Activated T-helper 2 cell treated with anti-CD3 and anti-CD28 coated beads, Interferon-gamma antibody, Interleukin-2, Interleukin-4, amounts not matched to agents 10 μg/mL and 5 μg/mL and 100 μg/mL, durations not matched to agents 14 hours and 24 hours and 36 hours (primary cell): ENCODE measurements at regions of chr1 and their contacts with region 1.

Region 1: GRCh38 chr1:168360151-168361021 is 79.7 kb downstream of the TBX19 start:
- DNase-seq: peak; percentile 39
- H3K4me3 Mint-ChIP-seq: peak overlapping the region; percentile 18
- H3K27ac Mint-ChIP-seq: peak overlapping the region; percentile 92
- H3K4me1 Mint-ChIP-seq: peaks cover 69% of the 10 kb centered on the region
- H3K27me3 Mint-ChIP-seq: no peaks in the 10 kb centered on the region

Region 2: GRCh38 chr1:168225476-168226190 is 134.8 kb before region 1 on chr1 and contains the start of gene SFT2D2:
- intact Hi-C with region 1: loop called (anchors 2 kb)
- DNase-seq: peak; percentile 77
- H3K4me3 Mint-ChIP-seq: peak within 1 kb of the TSS; percentile 98
- H3K27ac Mint-ChIP-seq: peak within 1 kb of the TSS; percentile 96
- H3K4me1 Mint-ChIP-seq: peaks cover 51% of the 10 kb centered on the region
- H3K27me3 Mint-ChIP-seq: no peaks in the 10 kb centered on the region
- total RNA-seq, gene SFT2D2: 106 and 119 TPM in 2 replicates

Region 3: GRCh38 chr1:168342572-168343280 is 17.7 kb before region 1 on chr1:
- intact Hi-C with region 1: loop called (anchors 1 kb)
- DNase-seq: peak; percentile 82
- H3K4me3 Mint-ChIP-seq: no peak overlapping the region
- H3K27ac Mint-ChIP-seq: peak overlapping the region; percentile 80
- H3K4me1 Mint-ChIP-seq: peaks cover 82% of the 10 kb centered on the region
- H3K27me3 Mint-ChIP-seq: no peaks in the 10 kb centered on the region

Region 4: GRCh38 chr1:168396940-168397698 is 36.7 kb after region 1 on chr1:
- intact Hi-C with region 1: loop called (anchors 1 kb)
- DNase-seq: no peak
- H3K4me3 Mint-ChIP-seq: no peak overlapping the region
- H3K27ac Mint-ChIP-seq: no peak overlapping the region
- H3K4me1 Mint-ChIP-seq: peaks cover 46% of the 10 kb centered on the region
- H3K27me3 Mint-ChIP-seq: peaks cover 4% of the 10 kb centered on the region

Region 5: DNA sequence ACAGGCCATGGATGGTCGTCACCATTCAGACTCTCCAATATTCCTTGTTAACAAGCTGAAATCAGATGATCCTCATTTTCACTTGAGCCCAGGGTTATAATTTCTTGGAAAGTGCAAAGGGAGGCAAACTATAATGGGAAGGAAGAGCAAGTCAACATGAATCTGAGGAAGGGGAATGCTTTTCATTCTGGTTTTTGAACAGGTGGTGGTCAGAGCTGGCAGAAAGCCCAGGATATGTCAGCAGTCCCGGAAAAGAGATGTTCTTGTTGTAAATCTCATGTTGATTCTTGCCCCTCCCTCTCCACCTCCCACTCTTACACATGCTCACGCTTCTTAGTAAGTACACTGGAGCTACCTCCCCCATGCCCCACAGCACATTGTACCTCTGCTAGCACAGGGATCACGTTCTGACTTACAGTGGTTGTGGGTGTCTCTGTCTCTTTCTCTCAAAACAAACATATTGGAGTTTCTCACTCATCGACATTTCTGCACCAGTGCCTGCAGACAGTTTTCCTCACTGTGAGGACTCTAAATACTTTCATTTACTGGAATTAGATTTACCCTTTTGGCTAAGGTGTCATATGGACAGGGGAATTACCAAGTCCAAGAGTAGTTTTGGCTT is 105.8 kb after region 1 on chr1:
- intact Hi-C with region 1: loop called (anchors 1 kb)
- DNase-seq: no peak
- H3K4me3 Mint-ChIP-seq: no peak overlapping the region
- H3K27ac Mint-ChIP-seq: peak overlapping the region; percentile 76
- H3K4me1 Mint-ChIP-seq: peaks cover 58% of the 10 kb centered on the region
- H3K27me3 Mint-ChIP-seq: no peaks in the 10 kb centered on the region

Region 6: DNA sequence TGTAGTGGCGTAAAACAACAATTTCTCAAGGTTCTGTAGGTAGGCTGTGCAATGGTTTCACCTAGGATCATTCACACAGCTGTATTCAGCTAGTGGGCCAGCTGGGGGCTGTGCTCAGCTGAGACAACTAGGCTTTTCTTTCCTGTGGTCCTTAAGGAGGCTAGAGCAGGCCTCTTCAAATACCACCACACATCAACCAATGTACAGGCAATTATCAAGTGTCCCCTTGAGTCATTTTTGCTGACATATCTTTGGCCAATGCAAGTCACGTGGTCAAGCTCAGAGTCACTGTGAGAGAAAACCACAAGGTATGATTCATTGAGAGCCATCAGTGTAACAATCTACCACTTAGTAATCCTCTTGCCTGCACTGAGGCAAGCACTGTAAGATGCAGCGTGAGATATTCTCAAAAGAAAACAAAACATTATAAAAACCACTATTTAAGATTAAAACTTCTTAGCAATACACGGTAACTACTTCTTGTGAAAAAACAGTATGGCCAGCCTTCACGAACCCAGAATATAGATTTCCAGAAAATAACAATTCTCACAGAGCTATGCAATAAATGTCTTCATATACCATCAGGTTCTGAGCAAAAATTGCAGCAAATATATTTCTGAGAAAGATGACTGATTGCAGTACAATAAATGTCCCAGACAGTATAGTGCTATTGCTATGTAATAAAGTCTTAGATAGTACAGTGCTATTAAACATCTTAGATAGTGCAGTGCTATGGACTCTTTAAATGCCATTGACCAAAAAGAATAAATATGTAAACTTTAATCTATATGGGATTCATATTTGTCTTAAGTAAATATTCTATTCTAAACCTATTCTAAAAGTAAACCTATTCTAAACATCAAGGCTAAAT is 951.9 kb after region 1 on chr1:
- intact Hi-C with region 1: loop called (anchors 1 kb)
- DNase-seq: peak; percentile 69
- H3K4me3 Mint-ChIP-seq: no peak overlapping the region
- H3K27ac Mint-ChIP-seq: peak overlapping the region; percentile 70
- H3K4me1 Mint-ChIP-seq: peaks cover 31% of the 10 kb centered on the region
- H3K27me3 Mint-ChIP-seq: no peaks in the 10 kb centered on the region

Region 7: DNA sequence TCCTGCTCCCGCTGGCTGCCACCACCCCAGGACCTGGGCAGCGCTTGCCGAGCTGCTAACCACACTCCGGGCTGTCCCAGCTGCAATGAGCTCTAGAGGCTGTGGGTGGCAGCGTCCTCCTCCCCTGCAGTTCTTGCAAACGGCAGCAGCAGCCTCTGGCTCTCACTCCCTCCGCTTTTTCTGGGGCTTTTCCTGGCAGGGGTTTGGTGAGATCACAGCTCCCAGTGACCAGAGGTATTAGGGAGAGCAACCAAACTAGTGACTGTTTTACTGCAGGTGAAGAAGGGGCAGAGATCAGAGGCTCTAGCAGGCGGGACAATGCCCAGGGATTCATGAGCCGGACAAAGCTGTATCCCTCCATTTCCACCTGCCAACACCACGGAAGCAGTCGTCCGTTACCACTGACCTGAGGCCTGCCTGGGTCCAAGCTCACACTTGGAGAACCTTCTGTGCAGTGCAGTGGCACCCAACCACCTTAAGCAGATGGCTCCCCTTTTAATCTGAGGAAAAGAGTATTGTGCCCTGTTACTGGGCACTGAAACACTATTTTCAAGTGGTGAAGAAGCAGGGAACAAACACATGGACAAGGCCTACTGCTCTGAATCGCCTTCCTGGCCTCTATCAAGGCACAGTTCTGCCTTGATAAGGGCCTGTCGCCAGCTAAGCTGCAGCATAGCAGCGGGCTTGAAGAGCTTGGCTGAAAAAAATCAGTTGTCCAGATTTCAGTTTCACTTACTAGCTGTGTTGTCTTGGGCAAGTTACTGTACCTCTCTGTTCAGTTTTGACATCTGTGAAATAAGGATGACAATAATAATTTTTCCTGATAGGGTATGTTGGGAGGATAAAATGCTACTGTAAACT is 1226.2 kb after region 1 on chr1 and contains the start of gene F5:
- intact Hi-C with region 1: loop called (anchors 5 kb)
- DNase-seq: peak; percentile 69
- H3K4me3 Mint-ChIP-seq: peak within 1 kb of the TSS; percentile 89
- H3K27ac Mint-ChIP-seq: peak within 1 kb of the TSS; percentile 83
- H3K4me1 Mint-ChIP-seq: peaks cover 59% of the 10 kb centered on the region
- H3K27me3 Mint-ChIP-seq: no peaks in the 10 kb centered on the region
- total RNA-seq, gene F5: 25.0 and 26.0 TPM in 2 replicates